ENCODE measurements at regions of chr1 and their contacts with region 1.

Region 1: DNA sequence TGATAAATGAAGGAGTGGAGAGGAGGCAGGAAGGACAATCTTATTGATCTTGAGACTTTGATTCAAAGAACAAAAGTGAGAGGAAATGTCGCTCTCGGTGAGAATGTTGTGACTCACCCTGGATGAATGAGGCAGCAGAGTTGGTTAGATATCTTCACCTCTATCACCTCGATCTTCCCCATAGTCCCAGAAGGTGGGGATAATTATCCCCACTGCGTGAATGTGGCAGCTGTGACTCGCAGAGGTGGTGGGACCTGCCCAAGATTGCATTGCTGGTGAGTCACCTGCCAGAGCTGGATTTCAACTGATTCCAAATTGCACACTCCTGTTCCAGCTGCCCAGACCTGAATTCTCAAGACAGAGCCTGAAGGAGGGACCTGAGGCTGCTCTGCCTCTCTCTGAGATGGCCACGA is 105.0 kb downstream of the MATN1 start:
- DNase-seq: peak; percentile 84 to 89
- H3K4me3 ChIP-seq: no peak overlapping the region
- H3K27ac ChIP-seq: peak overlapping the region; percentile 85
- H3K4me1 ChIP-seq: peaks cover 37% of the 10 kb centered on the region
- H3K27me3 ChIP-seq: no peaks in the 10 kb centered on the region
- CTCF ChIP-seq: no peak

Region 2: DNA sequence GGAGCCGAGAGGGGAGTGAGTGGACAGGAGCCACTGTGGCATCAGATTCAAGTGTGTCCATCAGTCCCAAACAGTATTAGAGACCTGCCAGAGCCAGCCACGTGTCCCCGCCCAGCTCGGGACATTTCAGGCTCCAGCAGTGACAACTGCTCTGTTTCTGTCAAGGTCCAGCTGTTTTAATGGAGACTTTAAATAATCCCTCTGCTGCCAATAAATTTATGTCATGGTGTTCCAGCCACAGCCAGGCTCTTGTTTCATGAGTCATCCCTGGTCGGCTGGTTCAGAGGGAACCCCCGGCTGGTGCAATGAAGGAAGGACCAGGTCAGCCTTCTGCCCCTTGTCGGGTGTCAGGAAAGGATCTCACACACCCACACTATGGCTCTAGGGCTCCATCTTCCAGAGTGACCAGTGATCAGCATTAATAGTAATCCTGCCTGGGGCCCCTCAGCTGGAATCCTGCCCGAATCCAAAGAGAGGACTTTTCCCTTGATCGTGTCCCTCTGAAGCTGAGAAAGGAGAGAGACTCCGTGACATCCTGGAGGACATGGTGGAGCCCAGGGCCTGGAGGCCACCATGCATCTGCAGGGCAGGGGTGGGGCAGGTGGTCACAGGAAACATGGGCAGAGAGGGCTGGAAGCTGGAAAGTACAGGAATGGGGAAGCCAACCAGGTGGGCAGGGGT is 92.2 kb before region 1 on chr1:
- CTCF ChIA-PET with region 1: no interaction called
- POLR2A ChIA-PET with region 1: no interaction called
- intact Hi-C with region 1: loop called (anchors 2 kb)
- DNase-seq: peak; percentile 65 to 72
- H3K4me3 ChIP-seq: no peak overlapping the region
- H3K27ac ChIP-seq: no peak overlapping the region; the same call in 1 of the 2 replicates
- H3K4me1 ChIP-seq: peaks cover 23% of the 10 kb centered on the region
- H3K27me3 ChIP-seq: no peaks in the 10 kb centered on the region
- CTCF ChIP-seq: no peak; the same call in 1 of the 2 replicates

Region 3: GRCh38 chr1:30550365-30551220 is 67.7 kb before region 1 on chr1:
- CTCF ChIA-PET with region 1: no interaction called
- POLR2A ChIA-PET with region 1: no interaction called
- intact Hi-C with region 1: no loop called
- DNase-seq: no peak
- H3K4me3 ChIP-seq: no peak overlapping the region
- H3K27ac ChIP-seq: no peak overlapping the region
- H3K4me1 ChIP-seq: no peaks in the 10 kb centered on the region
- H3K27me3 ChIP-seq: no peaks in the 10 kb centered on the region
- CTCF ChIP-seq: no peak

Region 4: DNA sequence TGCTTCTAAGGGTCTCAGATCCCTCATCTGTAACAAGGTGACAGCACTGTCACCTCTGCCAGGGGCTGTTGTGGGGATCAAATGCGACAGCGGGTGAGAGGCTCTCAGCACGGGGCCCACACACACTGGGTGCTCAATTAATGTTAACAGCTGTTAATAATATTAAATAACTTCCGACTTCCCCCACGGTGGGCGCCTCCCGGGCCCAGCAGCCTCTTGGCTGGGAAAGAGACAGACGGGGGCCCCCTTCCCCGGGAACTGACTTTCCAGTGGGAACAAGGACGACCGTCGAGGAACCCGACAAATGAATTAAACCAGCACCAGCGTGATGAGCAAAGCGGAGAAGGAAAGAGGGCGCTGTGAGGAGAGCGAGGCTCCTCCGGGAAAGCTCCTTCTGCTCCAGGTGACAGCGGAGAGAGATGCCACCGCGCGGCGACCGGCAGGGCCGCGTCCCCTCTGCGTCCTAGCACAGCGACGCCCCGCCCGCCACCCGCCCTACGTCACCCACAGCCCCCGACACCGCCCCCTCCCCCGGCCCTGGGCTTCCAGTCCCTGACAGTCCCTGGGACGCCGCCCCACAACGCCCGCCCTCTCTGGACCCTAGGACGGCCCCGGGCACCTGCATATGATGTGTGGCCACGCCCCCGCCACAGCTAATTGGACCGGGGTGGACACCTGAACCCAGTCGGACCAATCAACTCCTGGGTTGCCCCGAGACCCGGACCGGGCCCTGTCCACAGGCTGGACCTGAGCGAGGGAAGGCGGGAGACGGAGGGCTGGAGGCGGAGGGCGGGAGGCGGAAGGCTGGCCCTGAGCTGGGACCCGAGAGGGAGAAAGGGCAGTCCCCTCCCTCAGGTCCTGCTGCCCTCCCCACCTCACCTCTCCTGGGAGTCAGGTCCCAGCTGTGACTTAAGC is 66.8 kb after region 1 on chr1:
- CTCF ChIA-PET with region 1: no interaction called
- POLR2A ChIA-PET with region 1: no interaction called
- intact Hi-C with region 1: loop called (anchors 1 kb)
- DNase-seq: peak; percentile 77 to 96
- H3K4me3 ChIP-seq: peak overlapping the region; percentile 51; the same call in 1 of the 2 replicates
- H3K27ac ChIP-seq: no peak overlapping the region
- H3K4me1 ChIP-seq: peaks cover 15% of the 10 kb centered on the region
- H3K27me3 ChIP-seq: no peaks in the 10 kb centered on the region
- CTCF ChIP-seq: peak; percentile 42; the same call in 1 of the 2 replicates